ENCODE measurements at regions of chr6 and their contacts with region 1.

Region 1: GRCh38 chr6:156776840-156777576 is at the start of gene ARID1B:
- DNase-seq: peak; percentile 94
- H3K4me3 ChIP-seq: peak within 1 kb of the TSS; percentile 80
- H3K27ac ChIP-seq: peak within 1 kb of the TSS; percentile 97
- H3K4me1 ChIP-seq: peaks cover 36% of the 10 kb centered on the region
- CTCF ChIP-seq: no peak
- total RNA-seq, gene ARID1B: 71.8 and 90.1 TPM in 2 replicates

Region 2: GRCh38 chr6:156279261-156279969 is 497.6 kb before region 1 on chr6:
- CTCF ChIA-PET with region 1: no interaction called
- POLR2A ChIA-PET with region 1: interaction called, 5 read pairs
- intact Hi-C with region 1: loop called (anchors 5 kb)
- DNase-seq: peak; percentile 98
- H3K4me3 ChIP-seq: peak overlapping the region; percentile 61
- H3K27ac ChIP-seq: peak overlapping the region; percentile 96
- H3K4me1 ChIP-seq: peaks cover 61% of the 10 kb centered on the region
- CTCF ChIP-seq: no peak

Region 3: GRCh38 chr6:156582509-156582992 is 194.5 kb before region 1 on chr6:
- CTCF ChIA-PET with region 1: no interaction called
- POLR2A ChIA-PET with region 1: interaction called, 3 read pairs
- intact Hi-C with region 1: loop called (anchors 5 kb)
- DNase-seq: peak; percentile 89
- H3K4me3 ChIP-seq: peak overlapping the region; percentile 33
- H3K27ac ChIP-seq: peak overlapping the region; percentile 84
- H3K4me1 ChIP-seq: peaks cover 23% of the 10 kb centered on the region
- CTCF ChIP-seq: peak; percentile 59

Region 4: GRCh38 chr6:156699017-156699421 is 78.0 kb before region 1 on chr6:
- CTCF ChIA-PET with region 1: no interaction called
- POLR2A ChIA-PET with region 1: interaction called, 6 read pairs
- intact Hi-C with region 1: loop called (anchors 1 kb)
- DNase-seq: no peak
- H3K4me3 ChIP-seq: peak overlapping the region; percentile 43
- H3K27ac ChIP-seq: peak overlapping the region; percentile 98
- H3K4me1 ChIP-seq: peaks cover 87% of the 10 kb centered on the region
- CTCF ChIP-seq: no peak

Region 5: DNA sequence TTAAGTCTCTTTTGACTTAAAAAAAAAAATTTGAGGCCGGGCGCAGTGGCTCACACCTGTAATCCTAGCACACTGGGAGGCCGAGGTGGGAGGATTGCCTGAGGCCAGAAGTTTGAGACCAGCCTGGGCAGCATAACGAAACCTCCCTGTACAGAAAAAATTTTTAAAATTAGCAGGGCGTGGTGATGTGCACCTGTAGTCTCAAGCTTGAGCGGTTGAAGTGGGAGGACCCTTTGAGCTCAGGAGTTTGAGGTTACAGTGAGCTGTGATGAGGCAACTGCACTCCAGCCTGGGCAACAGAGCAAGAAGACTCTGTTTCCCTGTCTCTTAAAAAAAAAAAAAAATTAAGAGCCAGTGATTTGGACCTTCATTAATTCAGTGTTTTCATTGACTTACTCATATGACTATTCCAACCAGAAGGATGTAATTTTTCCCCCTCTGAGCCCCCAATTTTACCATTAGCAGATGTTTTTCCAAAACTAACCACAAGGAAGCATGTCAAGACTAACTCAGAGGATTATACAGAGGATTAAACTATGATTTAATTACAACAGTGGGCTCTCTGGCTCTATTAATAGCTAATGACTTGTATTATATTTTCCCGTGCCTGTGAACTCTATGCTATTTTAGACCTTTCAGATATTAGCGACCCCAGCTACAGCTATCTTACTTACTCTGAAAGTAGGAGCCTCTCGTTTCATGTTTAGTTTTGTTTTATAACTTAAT is 75.3 kb after region 1 on chr6:
- CTCF ChIA-PET with region 1: no interaction called
- POLR2A ChIA-PET with region 1: no interaction called
- intact Hi-C with region 1: loop called (anchors 2 kb)
- DNase-seq: peak; percentile 90
- H3K4me3 ChIP-seq: peak overlapping the region; percentile 43
- H3K27ac ChIP-seq: peak overlapping the region; percentile 67
- H3K4me1 ChIP-seq: peaks cover 83% of the 10 kb centered on the region
- CTCF ChIP-seq: no peak

Region 6: GRCh38 chr6:156976216-156977127 is 199.5 kb after region 1 on chr6:
- CTCF ChIA-PET with region 1: no interaction called
- POLR2A ChIA-PET with region 1: no interaction called
- intact Hi-C with region 1: loop called (anchors 5 kb)
- DNase-seq: peak; percentile 86
- H3K4me3 ChIP-seq: peak overlapping the region; percentile 66
- H3K27ac ChIP-seq: peak overlapping the region; percentile 88
- H3K4me1 ChIP-seq: peaks cover 86% of the 10 kb centered on the region
- CTCF ChIP-seq: no peak

Region 7: GRCh38 chr6:157274471-157275226 is 497.6 kb after region 1 on chr6:
- CTCF ChIA-PET with region 1: no interaction called
- POLR2A ChIA-PET with region 1: no interaction called
- intact Hi-C with region 1: loop called (anchors 10 kb)
- DNase-seq: peak; percentile 86
- H3K4me3 ChIP-seq: peak overlapping the region; percentile 67
- H3K27ac ChIP-seq: peak overlapping the region; percentile 34
- H3K4me1 ChIP-seq: peaks cover 23% of the 10 kb centered on the region
- CTCF ChIP-seq: peak; percentile 70